ENCODE measurements at regions of chr3 and their contacts with region 1.

Region 1: DNA sequence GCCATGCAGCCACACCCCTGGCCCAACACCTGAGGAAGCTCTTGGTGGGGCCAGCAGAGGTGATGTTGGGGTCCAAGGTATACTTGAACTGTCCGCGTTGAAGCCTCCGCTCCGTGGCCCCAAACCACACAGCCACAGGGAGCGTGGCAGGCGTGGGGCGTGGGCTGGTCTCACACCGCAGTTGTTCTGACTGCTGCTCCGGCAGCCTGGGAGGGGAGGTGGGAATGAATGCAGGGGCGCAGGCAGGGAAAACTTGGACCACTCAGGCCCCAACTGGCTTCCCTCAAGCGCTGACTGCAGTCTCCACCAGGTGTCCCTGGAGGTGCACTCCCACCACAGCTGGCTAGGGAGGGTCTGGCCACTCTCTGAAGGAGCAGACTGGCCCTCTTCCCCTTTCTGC is 14.3 kb downstream of the PLXNB1 start:
- DNase-seq: no peak
- H3K4me3 ChIP-seq: no peak overlapping the region
- H3K4me3 Mint-ChIP-seq: no peak overlapping the region
- H3K27ac Mint-ChIP-seq: peak overlapping the region; percentile 39
- H3K4me1 ChIP-seq: no peaks in the 10 kb centered on the region
- H3K4me1 Mint-ChIP-seq: peaks cover 5% of the 10 kb centered on the region
- H3K27me3 ChIP-seq: no peaks in the 10 kb centered on the region
- H3K27me3 Mint-ChIP-seq: no peaks in the 10 kb centered on the region
- CTCF ChIP-seq: peak in 1 of 2 experiments; percentile 35

Region 2: GRCh38 chr3:48318783-48319468 is 96.6 kb before region 1 on chr3:
- CTCF ChIA-PET with region 1: no interaction called
- POLR2A ChIA-PET with region 1: interaction called, 10 read pairs
- intact Hi-C with region 1: no loop called
- DNase-seq: no peak
- H3K4me3 ChIP-seq: no peak overlapping the region
- H3K4me3 Mint-ChIP-seq: no peak overlapping the region
- H3K27ac Mint-ChIP-seq: no peak overlapping the region
- H3K4me1 ChIP-seq: peaks cover 5% of the 10 kb centered on the region; the same call in 1 of the 2 replicates
- H3K4me1 Mint-ChIP-seq: peaks cover 11% of the 10 kb centered on the region
- H3K27me3 ChIP-seq: no peaks in the 10 kb centered on the region
- H3K27me3 Mint-ChIP-seq: no peaks in the 10 kb centered on the region
- CTCF ChIP-seq: no peak

Measured in Caco-2 (cell line).